ENCODE measurements at regions of chr7 and their contacts with region 1.

Region 1: GRCh38 chr7:45923290-45923689 is 2.2 kb upstream of the IGFBP3 start:
- DNase-seq: peak; percentile 58
- H3K4me3 ChIP-seq: no peak overlapping the region
- H3K27ac ChIP-seq: no peak overlapping the region
- H3K4me1 ChIP-seq: peaks cover 43% of the 10 kb centered on the region
- H3K27me3 ChIP-seq: peaks cover 6% of the 10 kb centered on the region
- CTCF ChIP-seq: peak; percentile 93 to 97

Region 2: DNA sequence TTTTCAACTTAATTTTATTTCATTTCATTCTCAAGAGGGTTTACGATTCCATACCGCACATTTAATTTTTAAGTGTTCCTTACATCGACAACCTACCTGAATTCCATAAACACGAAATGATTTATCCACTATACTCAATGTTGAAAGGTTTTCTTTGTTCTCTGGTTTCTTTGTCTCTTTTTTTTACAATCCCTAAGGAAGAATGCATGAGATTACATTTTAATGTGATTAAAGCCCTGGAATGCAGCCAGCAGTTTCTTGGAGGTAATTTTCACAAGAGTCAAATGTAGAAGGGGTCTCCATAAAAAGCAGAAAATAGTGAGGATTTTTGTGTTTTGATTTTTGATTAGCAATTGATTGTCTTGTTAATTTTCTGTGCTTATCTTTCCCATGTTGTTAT is 408.3 kb before region 1 on chr7:
- CTCF ChIA-PET with region 1: no interaction called
- dilution Hi-C with region 1: no loop called
- in situ Hi-C with region 1: no loop called
- intact Hi-C with region 1: no loop called
- DNase-seq: no peak
- H3K4me3 ChIP-seq: no peak overlapping the region
- H3K27ac ChIP-seq: no peak overlapping the region
- H3K4me1 ChIP-seq: no peaks in the 10 kb centered on the region
- H3K27me3 ChIP-seq: peaks cover 6% of the 10 kb centered on the region
- CTCF ChIP-seq: no peak

Region 3: DNA sequence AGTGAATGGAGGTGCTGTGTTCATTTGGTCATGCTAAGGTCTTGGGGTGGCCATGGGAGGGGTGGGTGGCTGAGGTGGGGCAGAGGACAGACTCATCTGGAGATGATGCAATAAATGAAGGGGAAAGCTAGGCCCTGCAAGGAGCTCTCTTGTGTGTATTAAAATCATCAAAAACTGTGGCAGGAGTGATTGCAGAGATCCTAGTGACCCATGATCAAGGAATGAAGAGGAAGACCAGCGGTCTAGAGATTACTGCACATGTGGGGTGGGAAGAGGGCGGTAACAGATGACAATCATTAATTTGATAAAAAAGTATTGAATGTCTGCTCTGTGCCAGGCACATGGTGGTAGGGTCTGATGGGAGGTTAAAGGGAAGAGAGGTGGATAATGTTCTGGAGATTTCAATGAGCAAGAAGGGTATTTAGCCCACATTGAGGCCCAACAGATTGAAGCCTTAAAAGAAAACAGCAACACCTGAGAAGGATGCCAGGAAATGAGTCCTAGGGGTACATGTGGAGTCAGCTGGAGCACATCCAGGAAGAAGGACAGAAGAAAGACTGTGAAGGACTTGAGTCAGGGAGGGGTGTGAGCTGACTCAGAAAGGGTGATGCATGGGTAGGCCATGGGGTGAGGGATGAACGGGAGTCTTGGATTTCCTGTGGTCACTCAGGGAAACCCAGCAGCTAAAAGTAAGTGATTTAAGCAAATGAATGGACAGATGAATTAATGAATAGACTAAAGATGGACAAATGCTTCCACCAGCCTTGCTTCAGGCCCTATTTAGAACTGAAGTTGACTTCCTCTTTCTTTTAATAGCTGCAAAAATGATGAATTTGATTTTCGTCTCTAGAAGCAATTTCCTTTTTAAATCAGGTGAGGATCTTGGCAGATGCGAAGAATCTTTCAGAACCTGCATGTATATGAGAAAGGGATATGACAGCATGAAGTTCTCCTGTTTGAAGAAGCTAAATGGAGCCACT is 80.9 kb after region 1 on chr7:
- CTCF ChIA-PET with region 1: no interaction called
- dilution Hi-C with region 1: loop called (anchors 10 kb)
- in situ Hi-C with region 1: no loop called
- intact Hi-C with region 1: no loop called
- DNase-seq: peak; percentile 98
- H3K4me3 ChIP-seq: no peak overlapping the region
- H3K27ac ChIP-seq: peak overlapping the region; percentile 56
- H3K4me1 ChIP-seq: peaks cover 43% of the 10 kb centered on the region
- H3K27me3 ChIP-seq: no peaks in the 10 kb centered on the region
- CTCF ChIP-seq: no peak

Region 4: DNA sequence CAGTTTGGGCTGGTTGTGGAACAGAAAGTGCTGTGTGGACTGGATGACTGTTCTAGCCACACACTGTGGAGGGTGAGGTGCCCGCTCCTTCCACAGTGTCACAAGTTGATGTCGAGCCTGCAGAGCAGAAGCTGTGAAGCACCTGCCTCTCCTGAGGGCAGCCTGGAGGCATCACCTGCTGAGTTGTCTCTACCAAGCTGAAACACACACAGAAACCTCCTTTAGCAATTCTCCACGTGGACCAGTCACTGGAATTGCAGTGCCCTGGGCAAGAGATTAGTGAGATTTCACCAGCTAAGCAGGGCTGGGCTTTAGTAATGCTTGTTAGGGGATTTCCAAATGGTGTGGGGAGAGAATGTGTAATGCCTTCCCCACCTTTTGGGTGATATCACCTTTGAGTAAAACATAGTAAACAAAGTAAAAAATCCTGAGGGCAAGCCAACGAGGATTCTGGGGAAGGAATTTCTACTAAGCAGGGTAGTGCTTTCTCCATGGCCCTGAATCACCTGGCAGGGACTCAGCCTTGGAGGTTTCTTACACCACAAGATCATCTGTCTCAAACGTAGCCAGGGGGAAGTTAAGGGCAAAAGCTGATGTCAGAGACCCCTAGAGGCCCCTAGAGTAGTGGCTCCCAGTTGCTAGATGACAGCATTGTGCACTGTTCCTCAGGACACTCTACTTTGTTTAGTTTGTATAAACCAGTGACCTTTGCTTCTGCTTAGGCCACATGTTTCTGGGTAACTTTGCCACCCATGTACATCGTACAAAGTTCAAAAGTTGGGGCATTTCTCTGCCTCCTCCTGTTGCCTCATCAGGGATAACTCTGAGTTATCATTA is 230.9 kb after region 1 on chr7:
- CTCF ChIA-PET with region 1: interaction called, 3 read pairs
- dilution Hi-C with region 1: no loop called
- in situ Hi-C with region 1: no loop called
- intact Hi-C with region 1: loop called (anchors 2 kb)
- DNase-seq: peak; percentile 99
- H3K4me3 ChIP-seq: no peak overlapping the region
- H3K27ac ChIP-seq: peak overlapping the region; percentile 52
- H3K4me1 ChIP-seq: peaks cover 12% of the 10 kb centered on the region
- H3K27me3 ChIP-seq: no peaks in the 10 kb centered on the region
- CTCF ChIP-seq: no peak

Region 5: GRCh38 chr7:46352004-46352954 is 429.0 kb after region 1 on chr7:
- CTCF ChIA-PET with region 1: interaction called, 4 read pairs
- dilution Hi-C with region 1: loop called (anchors 5 kb)
- in situ Hi-C with region 1: loop called (anchors 5 kb)
- intact Hi-C with region 1: loop called (anchors 1 kb)
- DNase-seq: peak; percentile 47
- H3K4me3 ChIP-seq: no peak overlapping the region
- H3K27ac ChIP-seq: no peak overlapping the region
- H3K4me1 ChIP-seq: no peaks in the 10 kb centered on the region
- H3K27me3 ChIP-seq: no peaks in the 10 kb centered on the region
- CTCF ChIP-seq: peak; percentile 53 to 89

Region 6: GRCh38 chr7:46932676-46933424 is 1009.6 kb after region 1 on chr7:
- CTCF ChIA-PET with region 1: interaction called, 3 read pairs
- dilution Hi-C with region 1: no loop called
- in situ Hi-C with region 1: loop called in 1 of 2 experiments (anchors 25 kb)
- intact Hi-C with region 1: loop called (anchors 1 kb)
- DNase-seq: peak; percentile 92
- H3K4me3 ChIP-seq: peak overlapping the region in 2 of 3 experiments; percentile 18 to 25
- H3K27ac ChIP-seq: peak overlapping the region; percentile 95
- H3K4me1 ChIP-seq: peaks cover 36% of the 10 kb centered on the region
- H3K27me3 ChIP-seq: no peaks in the 10 kb centered on the region
- CTCF ChIP-seq: peak; percentile 41 to 55